ENCODE measurements at regions of chr11 and their contacts with region 1.

Region 1: DNA sequence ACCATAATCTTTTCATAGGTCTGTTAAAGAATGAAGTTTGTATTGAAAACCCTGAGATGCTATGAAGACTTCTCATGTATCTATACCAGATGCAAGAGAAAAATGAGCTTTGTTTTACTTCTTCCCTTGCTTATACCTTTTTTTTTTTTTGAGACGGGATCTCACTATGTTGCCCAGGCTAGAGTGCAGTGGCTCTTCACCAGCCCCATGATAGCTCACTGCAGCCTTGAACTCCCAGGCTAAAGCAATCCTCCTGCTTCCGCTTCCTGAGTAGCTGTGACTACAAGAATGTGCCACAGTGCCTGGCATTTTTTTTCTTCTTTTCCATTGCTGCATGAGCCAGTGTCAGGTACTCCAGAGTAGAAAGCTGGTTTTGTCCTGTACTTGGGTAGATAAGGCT is 10.8 kb downstream of the CEP295 start:
- DNase-seq: no peak
- H3K4me3 ChIP-seq: no peak overlapping the region
- H3K27ac ChIP-seq: no peak overlapping the region
- H3K4me1 ChIP-seq: no peaks in the 10 kb centered on the region
- H3K27me3 ChIP-seq: no peaks in the 10 kb centered on the region
- CTCF ChIP-seq: no peak
- EP300 ChIP-seq: no peak
- POLR2A ChIP-seq: no peak

Region 2: GRCh38 chr11:93791493-93791892 is 119.2 kb after region 1 on chr11:
- intact Hi-C with region 1: loop called (anchors 10 kb)
- DNase-seq: no peak
- H3K4me3 ChIP-seq: no peak overlapping the region
- H3K27ac ChIP-seq: no peak overlapping the region
- H3K4me1 ChIP-seq: peaks cover 11 to 18% (median 14%) of the 10 kb centered on the region in 4 donors
- H3K27me3 ChIP-seq: no peaks in the 10 kb centered on the region
- CTCF ChIP-seq: no peak
- EP300 ChIP-seq: no peak
- POLR2A ChIP-seq: no peak

Measured in esophagus muscularis mucosa (tissue), 4 donors.